MCF 10A (cell line): ENCODE measurements at regions of chr13 and their contacts with region 1.

Region 1: DNA sequence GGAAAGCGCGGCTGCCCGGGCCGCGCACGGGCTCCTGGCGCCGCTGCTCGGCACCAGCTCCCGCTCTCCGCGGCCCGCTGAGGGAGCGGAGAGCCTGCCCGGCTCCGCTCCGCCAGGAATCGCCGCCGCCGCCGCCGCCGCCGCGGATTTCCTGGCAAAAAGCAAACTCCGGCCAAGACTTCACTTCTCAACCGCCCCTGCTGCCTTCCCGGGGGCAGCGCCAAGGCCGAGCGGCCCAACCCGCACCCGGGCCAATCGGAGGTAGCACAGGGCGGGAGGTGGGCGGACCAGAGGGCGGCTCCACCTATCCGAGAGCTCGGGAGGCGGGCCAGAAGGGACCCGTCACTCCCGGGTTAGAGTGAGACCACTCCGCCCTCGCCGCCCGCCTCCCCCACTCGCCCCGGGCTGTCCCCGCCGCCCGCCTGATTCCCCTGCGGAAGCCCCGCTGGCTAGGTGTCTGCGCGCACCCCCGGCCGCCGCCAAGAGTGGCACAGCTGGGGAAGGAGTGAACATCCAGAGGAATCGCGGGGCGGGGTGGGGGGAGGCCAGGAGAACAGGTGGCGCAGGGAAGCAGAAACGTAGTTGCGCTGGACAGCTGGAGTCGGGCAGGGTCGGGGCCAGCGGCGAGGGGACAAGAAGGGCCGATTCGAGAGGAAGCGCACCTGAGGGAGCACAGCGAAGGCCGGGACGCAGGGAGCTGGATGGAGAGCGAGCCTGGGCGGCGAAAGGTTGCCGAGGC is at the start of gene LNX2:
- DNase-seq: peak; percentile 97
- H3K4me3 Mint-ChIP-seq: peak within 1 kb of the TSS; percentile 93
- H3K27ac Mint-ChIP-seq: peak within 1 kb of the TSS; percentile 74
- H3K4me1 Mint-ChIP-seq: peaks cover 45% of the 10 kb centered on the region
- H3K27me3 Mint-ChIP-seq: no peaks in the 10 kb centered on the region
- CTCF ChIP-seq: no peak
- total RNA-seq, gene LNX2: 12.3 and 15.6 TPM in 2 replicates

Region 2: DNA sequence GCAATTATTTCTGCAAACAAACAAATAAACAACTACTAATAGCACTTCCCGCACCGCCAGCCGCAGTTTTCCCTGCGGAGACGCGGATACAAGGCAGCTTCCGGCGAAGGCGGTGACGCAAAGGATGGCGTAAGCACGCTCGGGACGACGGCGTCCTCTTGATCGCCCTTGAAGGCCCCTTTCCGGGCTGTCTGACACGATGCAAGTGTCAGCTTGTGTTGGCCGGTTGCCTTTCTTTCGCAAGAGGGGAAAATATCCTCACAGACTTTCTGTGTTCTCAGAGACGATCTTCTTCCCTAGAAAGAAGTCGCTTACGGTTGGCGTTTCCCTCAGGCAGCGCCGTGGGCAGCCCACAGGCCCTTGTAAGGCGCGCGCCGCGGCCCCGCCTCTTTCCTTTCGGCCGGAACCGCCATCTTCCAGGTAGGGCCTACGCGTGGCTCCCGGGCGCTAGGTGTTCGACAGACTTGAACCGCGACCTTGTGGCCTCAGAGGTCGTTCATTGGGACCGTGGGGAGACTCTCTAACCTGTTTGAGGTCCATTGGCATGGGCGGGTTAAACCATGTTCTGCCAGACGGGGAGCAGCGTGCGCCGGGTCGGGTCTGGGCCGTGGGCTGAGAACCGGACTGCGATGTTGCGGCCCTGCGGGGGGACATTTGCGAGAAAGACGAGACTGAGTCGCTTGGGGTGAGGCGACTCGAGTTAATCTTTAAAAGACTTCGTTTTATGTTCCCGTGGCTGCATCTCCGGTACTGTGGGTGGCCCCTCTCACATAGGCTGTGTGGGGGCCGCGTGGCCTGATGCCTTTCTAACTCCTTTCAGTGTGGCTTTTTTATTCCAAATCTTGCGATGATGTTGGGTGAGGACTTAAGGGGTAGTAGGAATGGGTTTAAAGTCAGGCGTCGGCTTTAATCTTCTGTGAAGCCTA is 369.1 kb before region 1 on chr13 and contains the start of gene RPL21:
- CTCF ChIA-PET with region 1: no interaction called
- POLR2A ChIA-PET with region 1: interaction called, 12 read pairs
- intact Hi-C with region 1: no loop called
- DNase-seq: peak; percentile 95
- H3K4me3 Mint-ChIP-seq: peak within 1 kb of the TSS; percentile 93
- H3K27ac Mint-ChIP-seq: peak within 1 kb of the TSS; percentile 99
- H3K4me1 Mint-ChIP-seq: peaks cover 14% of the 10 kb centered on the region
- H3K27me3 Mint-ChIP-seq: no peaks in the 10 kb centered on the region
- CTCF ChIP-seq: no peak
- total RNA-seq, gene RPL21: 1,293 and 1,479 TPM in 2 replicates

Region 3: GRCh38 chr13:27321468-27322431 is 298.8 kb before region 1 on chr13:
- CTCF ChIA-PET with region 1: no interaction called
- POLR2A ChIA-PET with region 1: no interaction called
- intact Hi-C with region 1: no loop called
- DNase-seq: no peak
- H3K4me3 Mint-ChIP-seq: no peak overlapping the region
- H3K27ac Mint-ChIP-seq: no peak overlapping the region
- H3K4me1 Mint-ChIP-seq: no peaks in the 10 kb centered on the region
- H3K27me3 Mint-ChIP-seq: peaks cover 46% of the 10 kb centered on the region
- CTCF ChIP-seq: no peak

Region 4: GRCh38 chr13:27442071-27442647 is 178.4 kb before region 1 on chr13:
- CTCF ChIA-PET with region 1: no interaction called
- POLR2A ChIA-PET with region 1: interaction called, 15 read pairs
- intact Hi-C with region 1: no loop called
- DNase-seq: no peak
- H3K4me3 Mint-ChIP-seq: no peak overlapping the region
- H3K27ac Mint-ChIP-seq: no peak overlapping the region
- H3K4me1 Mint-ChIP-seq: no peaks in the 10 kb centered on the region
- H3K27me3 Mint-ChIP-seq: no peaks in the 10 kb centered on the region
- CTCF ChIP-seq: no peak

Region 5: GRCh38 chr13:27481766-27482165 is 138.8 kb before region 1 on chr13:
- CTCF ChIA-PET with region 1: no interaction called
- POLR2A ChIA-PET with region 1: interaction called, 10 read pairs
- intact Hi-C with region 1: no loop called
- DNase-seq: peak; percentile 46
- H3K4me3 Mint-ChIP-seq: no peak overlapping the region
- H3K27ac Mint-ChIP-seq: no peak overlapping the region
- H3K4me1 Mint-ChIP-seq: peaks cover 10% of the 10 kb centered on the region
- H3K27me3 Mint-ChIP-seq: no peaks in the 10 kb centered on the region
- CTCF ChIP-seq: peak; percentile 54

Region 6: DNA sequence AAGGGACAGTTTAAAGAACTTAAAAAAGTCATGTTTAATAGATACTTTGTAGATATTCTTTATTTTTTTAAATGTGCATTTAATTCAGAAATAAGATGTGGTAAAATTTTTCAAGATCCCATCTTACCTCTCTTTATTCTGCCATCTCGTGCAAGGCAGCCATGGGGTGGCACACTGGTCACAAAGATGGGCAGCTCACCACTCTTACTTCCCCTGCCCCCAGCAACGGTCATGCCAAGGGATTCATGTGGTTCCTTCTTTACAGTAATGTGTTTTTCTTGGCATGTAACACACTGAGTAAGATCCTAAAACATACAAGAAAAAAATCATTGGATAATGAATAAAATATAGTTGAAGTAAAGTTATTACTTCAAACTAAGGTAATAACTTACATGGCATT is 64.4 kb before region 1 on chr13:
- CTCF ChIA-PET with region 1: interaction called, 3 read pairs
- POLR2A ChIA-PET with region 1: interaction called, 43 read pairs
- intact Hi-C with region 1: loop called (anchors 2 kb)
- DNase-seq: peak; percentile 83
- H3K4me3 Mint-ChIP-seq: no peak overlapping the region
- H3K27ac Mint-ChIP-seq: no peak overlapping the region
- H3K4me1 Mint-ChIP-seq: peaks cover 10% of the 10 kb centered on the region
- H3K27me3 Mint-ChIP-seq: no peaks in the 10 kb centered on the region
- CTCF ChIP-seq: peak; percentile 10

Region 7: GRCh38 chr13:27587095-27587746 is 33.3 kb before region 1 on chr13:
- CTCF ChIA-PET with region 1: no interaction called
- POLR2A ChIA-PET with region 1: interaction called, 18 read pairs
- intact Hi-C with region 1: no loop called
- DNase-seq: no peak
- H3K4me3 Mint-ChIP-seq: no peak overlapping the region
- H3K27ac Mint-ChIP-seq: no peak overlapping the region
- H3K4me1 Mint-ChIP-seq: peaks cover 6% of the 10 kb centered on the region
- H3K27me3 Mint-ChIP-seq: no peaks in the 10 kb centered on the region
- CTCF ChIP-seq: no peak

Region 8: GRCh38 chr13:27635266-27635665 is 14.7 kb after region 1 on chr13:
- CTCF ChIA-PET with region 1: interaction called, 7 read pairs
- POLR2A ChIA-PET with region 1: interaction called, 198 read pairs
- intact Hi-C with region 1: no loop called
- DNase-seq: no peak
- H3K4me3 Mint-ChIP-seq: no peak overlapping the region
- H3K27ac Mint-ChIP-seq: peak overlapping the region; percentile 72
- H3K4me1 Mint-ChIP-seq: peaks cover 35% of the 10 kb centered on the region
- H3K27me3 Mint-ChIP-seq: no peaks in the 10 kb centered on the region
- CTCF ChIP-seq: no peak

Region 9: GRCh38 chr13:27977476-27978300 is 357.1 kb after region 1 on chr13:
- CTCF ChIA-PET with region 1: no interaction called
- POLR2A ChIA-PET with region 1: no interaction called
- intact Hi-C with region 1: no loop called
- DNase-seq: no peak
- H3K4me3 Mint-ChIP-seq: no peak overlapping the region
- H3K27ac Mint-ChIP-seq: no peak overlapping the region
- H3K4me1 Mint-ChIP-seq: peaks cover 7% of the 10 kb centered on the region
- H3K27me3 Mint-ChIP-seq: peaks cover 85% of the 10 kb centered on the region
- CTCF ChIP-seq: no peak